ENCODE measurements at regions of chr9 and their contacts with region 1.

Region 1: GRCh38 chr9:34759432-34760134 is 49.6 kb upstream of the CCL21 start:
- DNase-seq: no peak
- H3K4me3 ChIP-seq: no peak overlapping the region
- H3K27ac ChIP-seq: no peak overlapping the region
- H3K4me1 ChIP-seq: no peaks in the 10 kb centered on the region
- H3K27me3 ChIP-seq: peaks cover 0 to 2% of the 10 kb centered on the region in 2 experiments
- CTCF ChIP-seq: no peak
- POLR2A ChIP-seq: no peak

Region 2: DNA sequence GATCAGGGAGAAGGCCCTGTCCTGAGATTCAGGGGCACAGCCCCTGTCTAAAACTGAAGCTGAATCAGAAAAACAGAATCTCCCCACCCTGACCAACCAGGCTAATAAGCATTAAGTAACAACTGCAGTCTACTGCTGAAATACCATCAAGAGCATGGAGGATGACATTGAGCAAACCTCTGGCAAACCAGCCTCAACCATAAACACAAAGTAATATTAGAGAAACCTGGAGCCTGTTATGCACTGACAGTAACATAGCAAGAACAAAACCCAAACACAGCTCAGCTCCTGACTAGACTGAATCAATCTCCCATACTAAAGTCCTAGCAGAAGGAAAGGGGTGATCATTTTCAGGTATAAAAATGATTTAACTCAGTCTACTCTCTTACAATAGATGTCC is 24.9 kb before region 1 on chr9:
- CTCF ChIA-PET with region 1: no interaction called
- POLR2A ChIA-PET with region 1: no interaction called
- dilution Hi-C with region 1: no loop called
- intact Hi-C with region 1: loop called (anchors 2 kb)
- DNase-seq: no peak
- H3K4me3 ChIP-seq: no peak overlapping the region
- H3K27ac ChIP-seq: no peak overlapping the region
- H3K4me1 ChIP-seq: no peaks in the 10 kb centered on the region
- H3K27me3 ChIP-seq: peaks cover 9% of the 10 kb centered on the region in 2 experiments
- CTCF ChIP-seq: no peak
- POLR2A ChIP-seq: no peak

Region 3: DNA sequence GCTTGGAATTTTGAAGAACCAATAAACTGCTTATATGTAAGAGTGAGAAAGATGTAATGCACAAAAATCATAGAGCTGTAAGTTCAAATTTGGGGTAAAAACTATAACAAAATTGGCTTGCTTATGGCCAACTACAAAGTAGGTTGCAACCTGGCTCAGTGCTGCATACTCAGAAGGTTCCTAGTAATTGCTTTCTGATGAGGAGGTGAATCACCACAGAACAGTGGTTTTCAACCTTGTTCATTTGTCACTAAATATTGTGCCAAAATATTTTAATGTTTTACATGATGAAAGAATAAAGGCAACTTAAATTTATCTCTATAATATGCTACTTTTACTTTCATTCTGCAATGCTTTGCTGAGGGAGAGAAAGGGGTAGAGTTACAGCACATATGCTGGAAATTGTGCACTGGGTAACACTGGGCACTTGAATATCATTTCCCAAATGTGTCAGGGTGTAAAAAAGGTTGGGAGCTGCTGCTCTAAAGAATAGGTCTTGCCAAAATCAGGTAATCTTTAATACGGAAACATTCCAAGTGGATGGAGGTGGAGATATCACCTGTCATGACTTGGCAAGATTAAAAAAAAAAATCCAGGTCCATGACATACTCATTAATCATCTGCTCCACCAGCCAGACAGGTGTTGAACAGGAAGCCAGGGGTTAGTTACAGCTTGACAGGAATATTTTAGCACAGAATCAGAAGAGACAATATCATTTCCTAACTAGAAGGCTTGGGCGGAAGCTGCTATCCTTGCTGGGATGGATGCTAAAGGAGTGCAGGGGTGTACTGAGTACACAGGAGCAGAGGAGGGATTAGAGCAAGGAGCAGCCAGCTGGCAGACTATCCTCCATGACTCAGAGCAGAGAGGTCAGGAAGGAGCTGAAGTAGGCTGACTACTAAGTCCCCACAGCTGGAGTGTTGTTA is 15.0 kb before region 1 on chr9:
- CTCF ChIA-PET with region 1: interaction called, 19 read pairs
- POLR2A ChIA-PET with region 1: no interaction called
- dilution Hi-C with region 1: no loop called
- intact Hi-C with region 1: no loop called
- DNase-seq: no peak
- H3K4me3 ChIP-seq: no peak overlapping the region
- H3K27ac ChIP-seq: no peak overlapping the region
- H3K4me1 ChIP-seq: no peaks in the 10 kb centered on the region
- H3K27me3 ChIP-seq: peaks cover 11 to 15% of the 10 kb centered on the region in 2 experiments
- CTCF ChIP-seq: no peak
- POLR2A ChIP-seq: no peak

Region 4: DNA sequence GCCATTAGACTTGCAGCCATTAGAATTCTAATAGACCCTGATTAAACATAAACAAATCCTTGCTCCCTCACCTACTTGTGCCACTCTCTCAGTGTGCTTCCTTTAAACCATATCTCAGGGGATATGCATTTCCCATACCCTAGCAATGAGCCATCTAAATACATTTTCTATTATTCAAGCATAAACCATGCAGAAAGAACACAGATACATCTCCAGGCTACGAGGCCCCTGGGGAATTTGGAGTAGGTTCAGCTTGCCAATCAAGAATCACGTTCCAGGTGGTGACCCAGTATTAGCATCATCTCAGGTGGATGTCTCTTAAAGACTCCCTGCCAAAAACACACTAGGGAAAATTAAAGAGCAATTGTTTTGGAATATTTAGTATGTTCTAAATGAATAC is 43.3 kb after region 1 on chr9:
- CTCF ChIA-PET with region 1: no interaction called
- POLR2A ChIA-PET with region 1: no interaction called
- dilution Hi-C with region 1: no loop called
- intact Hi-C with region 1: no loop called
- DNase-seq: no peak
- H3K4me3 ChIP-seq: no peak overlapping the region
- H3K27ac ChIP-seq: no peak overlapping the region
- H3K4me1 ChIP-seq: no peaks in the 10 kb centered on the region
- H3K27me3 ChIP-seq: peaks cover 4 to 22% of the 10 kb centered on the region in 2 experiments
- CTCF ChIP-seq: no peak
- POLR2A ChIP-seq: no peak

Region 5: DNA sequence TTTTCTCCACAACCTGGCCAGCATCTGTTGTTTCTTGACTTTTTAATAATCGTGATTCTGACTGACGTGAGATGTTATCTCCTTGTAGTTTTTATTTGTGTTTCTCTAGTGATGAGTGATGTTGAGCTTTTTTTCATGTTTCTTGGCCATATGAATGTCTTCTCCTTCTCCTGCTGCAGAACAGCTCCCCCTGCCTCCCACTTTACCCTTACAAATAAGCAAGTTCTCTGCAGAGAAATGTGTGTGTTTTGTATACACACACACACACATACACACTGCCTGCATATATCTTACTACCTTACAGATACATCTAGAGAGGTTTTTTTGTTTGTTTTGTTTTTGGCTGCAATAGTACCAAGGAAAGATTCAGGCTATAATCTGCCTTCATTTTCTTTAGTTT is 109.8 kb after region 1 on chr9:
- CTCF ChIA-PET with region 1: interaction called, 10 read pairs
- POLR2A ChIA-PET with region 1: no interaction called
- dilution Hi-C with region 1: no loop called
- intact Hi-C with region 1: no loop called
- DNase-seq: peak; percentile 19
- H3K4me3 ChIP-seq: no peak overlapping the region
- H3K27ac ChIP-seq: no peak overlapping the region
- H3K4me1 ChIP-seq: no peaks in the 10 kb centered on the region
- H3K27me3 ChIP-seq: peaks cover 6 to 7% of the 10 kb centered on the region in 2 experiments
- CTCF ChIP-seq: peak in 1 of 2 donors; percentile 17
- POLR2A ChIP-seq: no peak